Activated CD4-positive, alpha-beta memory T cell treated with anti-CD3 and anti-CD28 coated beads, Interleukin-2, amount 10 ng/mL, durations not matched to agents 7 days and 5 days (primary cell): ENCODE measurements at regions of chr5 and their contacts with region 1.

Region 1: GRCh38 chr5:112757468-112758208 is 20.0 kb downstream of the APC start:
- DNase-seq: no peak
- H3K4me3 Mint-ChIP-seq: no peak overlapping the region
- H3K27ac Mint-ChIP-seq: no peak overlapping the region
- H3K4me1 Mint-ChIP-seq: peaks cover 3% of the 10 kb centered on the region
- H3K27me3 Mint-ChIP-seq: no peaks in the 10 kb centered on the region

Region 2: GRCh38 chr5:112551419-112552032 is 206.1 kb before region 1 on chr5:
- CTCF ChIA-PET with region 1: interaction called, 60 read pairs
- POLR2A ChIA-PET with region 1: no interaction called
- DNase-seq: peak; percentile 27
- H3K4me3 Mint-ChIP-seq: no peak overlapping the region
- H3K27ac Mint-ChIP-seq: no peak overlapping the region
- H3K4me1 Mint-ChIP-seq: peaks cover 2% of the 10 kb centered on the region
- H3K27me3 Mint-ChIP-seq: peaks cover 5% of the 10 kb centered on the region

Region 3: GRCh38 chr5:112691758-112692157 is 65.9 kb before region 1 on chr5:
- CTCF ChIA-PET with region 1: interaction called, 43 read pairs
- POLR2A ChIA-PET with region 1: no interaction called
- DNase-seq: peak; percentile 27
- H3K4me3 Mint-ChIP-seq: no peak overlapping the region
- H3K27ac Mint-ChIP-seq: no peak overlapping the region
- H3K4me1 Mint-ChIP-seq: peaks cover 8% of the 10 kb centered on the region
- H3K27me3 Mint-ChIP-seq: peaks cover 48% of the 10 kb centered on the region

Region 4: GRCh38 chr5:112707187-112708102 is 50.2 kb before region 1 on chr5:
- CTCF ChIA-PET with region 1: interaction called, 10 read pairs
- POLR2A ChIA-PET with region 1: no interaction called
- DNase-seq: peak; percentile 97
- H3K4me3 Mint-ChIP-seq: peak overlapping the region; percentile 90
- H3K27ac Mint-ChIP-seq: peak overlapping the region; percentile 72
- H3K4me1 Mint-ChIP-seq: peaks cover 35% of the 10 kb centered on the region
- H3K27me3 Mint-ChIP-seq: peaks cover 3% of the 10 kb centered on the region

Region 5: GRCh38 chr5:112742424-112742823 is 15.2 kb before region 1 on chr5:
- CTCF ChIA-PET with region 1: interaction called, 13 read pairs
- POLR2A ChIA-PET with region 1: no interaction called
- DNase-seq: no peak
- H3K4me3 Mint-ChIP-seq: no peak overlapping the region
- H3K27ac Mint-ChIP-seq: no peak overlapping the region
- H3K4me1 Mint-ChIP-seq: peaks cover 14% of the 10 kb centered on the region
- H3K27me3 Mint-ChIP-seq: no peaks in the 10 kb centered on the region